Activated T-helper 1 cell treated with anti-CD3 and anti-CD28 coated beads, Interleukin-12 subunit alpha, Interleukin-12 subunit beta, Interleukin-2, Interleukin-4 antibody, amounts not matched to agents 30 ng/mL and 10 ng/mL and 1 ng/mL, durations not matched to agents 14 hours and 24 hours and 36 hours (primary cell): ENCODE measurements at regions of chr19 and their contacts with region 1.

Region 1: GRCh38 chr19:6813659-6814058 is 41.2 kb downstream of the VAV1 start:
- DNase-seq: no peak
- H3K4me3 Mint-ChIP-seq: no peak overlapping the region
- H3K27ac Mint-ChIP-seq: no peak overlapping the region
- H3K4me1 Mint-ChIP-seq: peaks cover 53% of the 10 kb centered on the region
- H3K27me3 Mint-ChIP-seq: no peaks in the 10 kb centered on the region

Region 2: DNA sequence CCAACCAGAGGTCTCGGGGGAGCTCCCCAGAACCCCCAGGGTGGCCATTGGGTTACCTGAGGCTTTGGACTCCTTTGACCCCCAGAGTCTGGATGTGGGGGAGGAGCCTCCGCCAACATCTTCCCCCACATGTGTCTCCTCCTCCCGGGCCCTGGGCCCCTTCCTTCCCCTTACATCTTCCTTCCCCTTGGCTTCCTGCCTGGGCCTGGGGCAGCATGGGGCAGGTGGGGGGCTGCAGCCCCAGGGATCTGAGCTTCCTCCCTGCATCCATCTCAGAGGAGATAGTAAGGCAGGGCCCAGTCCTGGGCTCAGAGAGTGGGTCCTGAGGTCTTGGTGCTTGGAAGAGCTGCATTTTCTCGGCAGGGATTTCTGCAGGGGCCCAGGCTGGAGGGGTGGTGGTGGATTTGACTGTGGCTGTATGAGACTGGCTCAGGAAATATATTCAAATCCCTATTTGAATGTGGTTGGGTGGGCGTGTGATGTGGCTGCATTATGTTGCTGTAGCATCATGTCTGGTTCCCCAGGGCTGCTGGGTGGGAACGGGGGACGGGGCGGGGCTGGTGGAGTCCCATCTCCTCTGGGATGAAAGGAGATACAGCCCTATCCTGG is 40.2 kb before region 1 on chr19:
- intact Hi-C with region 1: loop called (anchors 1 kb)
- DNase-seq: peak; percentile 34
- H3K4me3 Mint-ChIP-seq: peak overlapping the region; percentile 92
- H3K27ac Mint-ChIP-seq: peak overlapping the region; percentile 93
- H3K4me1 Mint-ChIP-seq: peaks cover 62% of the 10 kb centered on the region
- H3K27me3 Mint-ChIP-seq: no peaks in the 10 kb centered on the region

Region 3: GRCh38 chr19:6801485-6802086 is 12.1 kb before region 1 on chr19:
- intact Hi-C with region 1: loop called (anchors 1 kb)
- DNase-seq: peak; percentile 72
- H3K4me3 Mint-ChIP-seq: peak overlapping the region; percentile 92
- H3K27ac Mint-ChIP-seq: peak overlapping the region; percentile 99
- H3K4me1 Mint-ChIP-seq: peaks cover 61% of the 10 kb centered on the region
- H3K27me3 Mint-ChIP-seq: no peaks in the 10 kb centered on the region

Region 4: DNA sequence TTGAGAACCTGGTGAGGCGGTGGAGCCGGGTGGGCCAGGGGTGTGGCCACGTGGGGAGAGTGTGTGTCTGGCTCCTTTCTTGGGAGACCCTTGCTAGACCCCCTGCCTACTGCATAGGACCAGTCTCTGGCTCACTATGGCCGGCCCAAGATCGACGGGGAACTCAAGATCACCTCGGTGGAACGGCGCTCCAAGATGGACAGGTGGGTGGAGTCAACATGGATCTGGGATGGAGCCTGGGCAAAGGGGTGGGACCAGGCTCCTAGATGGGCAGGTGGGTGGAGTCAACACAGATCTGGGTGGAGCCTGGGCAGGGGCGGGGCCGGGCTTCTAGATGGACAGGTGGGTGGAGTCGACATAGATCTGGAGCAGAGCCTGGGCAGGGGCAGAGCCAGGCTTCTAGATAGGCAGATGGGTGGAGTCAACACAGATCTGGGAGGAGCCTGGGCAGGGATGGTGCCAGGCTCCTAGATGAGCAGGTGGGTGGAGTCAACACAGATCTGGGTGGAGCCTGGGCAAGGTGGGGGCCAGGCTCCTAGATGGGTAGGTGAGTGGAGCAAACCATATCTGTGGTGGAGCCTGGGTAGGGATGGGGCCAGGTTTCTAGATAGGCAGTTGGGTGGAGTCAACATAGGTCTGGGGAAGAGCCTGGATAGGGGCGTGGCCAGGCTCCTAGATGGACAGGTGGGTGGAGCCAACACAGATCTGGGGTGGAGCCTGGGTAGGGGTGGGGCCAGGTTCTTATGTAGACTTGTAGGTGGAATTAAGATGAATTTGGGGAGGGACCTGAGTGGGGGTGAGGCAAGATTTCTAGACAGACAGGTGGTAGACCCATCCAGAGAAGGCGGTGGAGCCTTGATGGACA is 15.3 kb after region 1 on chr19:
- intact Hi-C with region 1: loop called (anchors 1 kb)
- DNase-seq: peak; percentile 19
- H3K4me3 Mint-ChIP-seq: no peak overlapping the region
- H3K27ac Mint-ChIP-seq: peak overlapping the region; percentile 49
- H3K4me1 Mint-ChIP-seq: peaks cover 9% of the 10 kb centered on the region
- H3K27me3 Mint-ChIP-seq: no peaks in the 10 kb centered on the region